ENCODE measurements at regions of chr6 and their contacts with region 1.

Region 1: DNA sequence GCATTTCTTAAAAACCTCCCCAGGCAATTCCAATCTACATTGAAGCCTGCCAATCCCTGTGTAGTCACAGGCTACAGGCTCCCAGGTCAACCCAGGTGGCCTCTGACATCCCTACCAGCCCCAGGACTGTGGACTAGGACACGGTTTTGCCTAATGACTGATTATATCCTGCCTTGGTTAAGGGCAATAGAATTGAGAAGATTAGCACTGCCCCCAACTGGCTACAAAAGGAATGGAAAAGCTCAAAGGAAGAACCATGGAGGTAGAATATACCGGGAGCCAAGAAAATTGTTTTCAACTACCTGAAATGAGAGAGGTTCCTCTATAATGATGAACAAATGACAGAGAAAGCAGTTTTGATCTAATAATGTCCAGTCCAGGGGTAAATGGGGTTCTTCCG is 421.1 kb upstream of the AGPAT4 start:
- DNase-seq: no peak
- H3K4me3 ChIP-seq: no peak overlapping the region
- H3K27ac ChIP-seq: no peak overlapping the region
- H3K4me1 ChIP-seq: no peaks in the 10 kb centered on the region
- H3K27me3 ChIP-seq: no peaks in the 10 kb centered on the region
- CTCF ChIP-seq: peak; percentile 31 to 58

Region 2: GRCh38 chr6:161406646-161407045 is 288.3 kb before region 1 on chr6:
- CTCF ChIA-PET with region 1: no interaction called
- dilution Hi-C with region 1: no loop called
- in situ Hi-C with region 1: loop called in 1 of 2 experiments (anchors 10 kb)
- intact Hi-C with region 1: no loop called
- DNase-seq: peak; percentile 95
- H3K4me3 ChIP-seq: no peak overlapping the region
- H3K27ac ChIP-seq: peak overlapping the region; percentile 77
- H3K4me1 ChIP-seq: peaks cover 17% of the 10 kb centered on the region
- H3K27me3 ChIP-seq: no peaks in the 10 kb centered on the region
- CTCF ChIP-seq: no peak

Region 3: GRCh38 chr6:161418463-161418945 is 276.5 kb before region 1 on chr6:
- CTCF ChIA-PET with region 1: no interaction called
- dilution Hi-C with region 1: no loop called
- in situ Hi-C with region 1: no loop called
- intact Hi-C with region 1: loop called (anchors 2 kb)
- DNase-seq: peak; percentile 61
- H3K4me3 ChIP-seq: no peak overlapping the region
- H3K27ac ChIP-seq: no peak overlapping the region
- H3K4me1 ChIP-seq: peaks cover 3% of the 10 kb centered on the region
- H3K27me3 ChIP-seq: no peaks in the 10 kb centered on the region
- CTCF ChIP-seq: peak; percentile 60 to 67

Region 4: DNA sequence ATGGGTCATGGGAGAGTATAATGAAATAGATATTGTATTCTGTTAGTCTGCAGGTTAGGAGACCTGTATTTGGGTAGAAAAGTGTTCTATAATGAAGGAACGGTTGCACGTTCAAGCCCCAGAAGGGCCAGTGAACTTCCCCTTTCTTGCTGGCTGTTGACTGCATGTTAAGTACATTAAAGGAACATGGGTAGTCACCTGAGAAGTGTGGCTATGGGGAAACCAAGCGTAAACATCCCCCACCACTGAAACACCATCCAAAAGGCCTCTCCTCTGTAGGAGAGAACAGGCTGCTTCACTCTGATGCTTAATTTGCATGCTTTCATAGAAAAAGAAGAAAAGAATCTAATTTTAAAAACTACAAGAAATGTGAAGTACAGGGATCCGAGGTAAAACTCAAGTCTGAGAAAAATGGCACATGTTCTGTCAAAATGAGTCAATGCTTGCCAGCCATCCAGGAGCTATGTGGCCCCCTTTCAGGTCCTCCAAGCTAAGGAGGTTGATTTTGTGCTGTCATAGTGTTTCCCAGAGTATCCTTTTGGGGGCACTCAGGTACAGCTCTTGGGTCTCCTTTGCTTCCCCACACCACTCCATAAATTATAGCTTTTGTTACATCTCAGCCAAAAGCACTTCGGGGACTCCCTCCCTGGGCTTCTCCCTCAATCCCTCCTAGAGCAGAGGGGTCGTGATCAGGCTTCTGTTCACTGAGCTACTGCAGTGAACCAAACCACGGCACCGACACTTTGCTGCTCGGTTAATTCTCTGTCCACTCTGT is 137.5 kb before region 1 on chr6:
- CTCF ChIA-PET with region 1: interaction called, 6 read pairs
- dilution Hi-C with region 1: no loop called
- in situ Hi-C with region 1: no loop called
- intact Hi-C with region 1: loop called (anchors 2 kb)
- DNase-seq: no peak
- H3K4me3 ChIP-seq: no peak overlapping the region
- H3K27ac ChIP-seq: no peak overlapping the region
- H3K4me1 ChIP-seq: no peaks in the 10 kb centered on the region
- H3K27me3 ChIP-seq: no peaks in the 10 kb centered on the region
- CTCF ChIP-seq: peak in 1 of 2 donors; percentile 41

Region 5: DNA sequence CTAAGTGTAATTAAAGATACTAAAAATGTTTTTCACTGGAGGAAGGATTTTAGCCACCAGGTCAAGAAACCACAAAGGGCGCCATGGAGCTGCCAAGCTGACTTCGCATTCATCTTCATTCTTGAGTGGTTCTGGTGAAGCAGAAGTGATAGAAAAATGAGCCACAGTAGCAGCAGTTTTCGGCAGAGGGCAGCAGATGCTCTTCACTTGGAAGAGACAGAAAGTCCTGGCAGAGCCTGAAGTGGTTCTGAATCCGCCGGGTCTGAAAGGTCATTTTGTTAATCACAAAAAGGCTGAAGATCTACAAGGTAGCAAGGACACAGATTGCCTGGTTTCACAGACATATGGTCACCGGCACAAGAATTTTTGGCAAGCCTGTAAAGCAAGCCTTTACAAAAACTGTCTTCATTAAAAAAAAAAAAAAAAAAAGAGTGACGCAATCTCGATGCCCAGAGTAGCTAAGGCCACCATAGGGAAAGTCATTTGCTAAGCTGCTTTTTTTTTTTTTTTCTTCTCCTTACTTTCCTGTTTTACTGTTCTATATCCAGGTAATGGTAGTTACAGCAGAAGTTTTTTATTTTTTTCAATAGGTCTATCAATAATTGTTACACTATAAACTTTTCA is 76.1 kb before region 1 on chr6:
- CTCF ChIA-PET with region 1: no interaction called
- dilution Hi-C with region 1: no loop called
- in situ Hi-C with region 1: no loop called
- intact Hi-C with region 1: loop called (anchors 10 kb)
- DNase-seq: peak; percentile 35
- H3K4me3 ChIP-seq: peak overlapping the region in 1 of 3 experiments; percentile 14
- H3K27ac ChIP-seq: no peak overlapping the region
- H3K4me1 ChIP-seq: no peaks in the 10 kb centered on the region
- H3K27me3 ChIP-seq: no peaks in the 10 kb centered on the region
- CTCF ChIP-seq: peak; percentile 36 to 70

Measured in mammary epithelial cell (primary cell).